HepG2 (cell line): ENCODE measurements at regions of chr11 and their contacts with region 1.

Region 1: DNA sequence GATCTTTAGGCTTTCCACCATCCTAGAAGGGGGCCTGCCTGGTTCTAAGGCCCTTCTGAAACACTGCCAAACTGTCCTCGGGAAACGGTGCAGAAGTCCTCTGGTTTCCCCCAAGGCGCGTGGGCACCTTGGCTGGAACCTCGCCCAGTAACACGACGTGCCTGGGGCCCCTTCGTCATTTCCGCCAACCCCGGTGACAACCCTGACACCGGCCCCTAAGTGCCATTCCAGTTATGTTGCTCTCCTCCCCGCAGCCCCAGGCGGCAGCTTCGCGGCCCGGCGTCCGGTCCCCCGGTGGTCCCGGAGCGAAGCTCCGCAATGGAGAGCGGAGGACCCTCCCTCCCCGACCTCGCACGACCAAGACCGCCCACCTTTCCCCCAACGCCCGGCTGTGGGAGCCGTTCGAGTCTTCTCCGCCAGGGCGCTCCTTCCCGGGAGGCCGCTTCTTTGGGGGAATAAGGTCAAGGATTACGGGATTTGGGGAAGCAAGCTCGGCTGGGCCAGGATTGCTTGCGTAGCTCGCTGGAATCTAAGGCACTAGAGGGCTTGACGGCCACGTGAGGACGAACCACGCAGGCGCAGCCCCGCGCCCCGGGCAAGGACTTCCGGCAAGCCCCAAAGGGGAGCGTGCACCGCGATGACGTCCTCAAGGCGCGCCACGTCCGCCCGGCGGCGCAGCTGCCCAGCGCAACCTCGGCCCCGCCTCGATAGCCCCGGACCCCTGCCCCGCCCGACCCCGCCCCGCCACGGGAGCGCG is 626 bp downstream of the RNH1 start:
- DNase-seq: peak; percentile 88
- ATAC-seq: peak; percentile 86
- H3K4me3 ChIP-seq: peak overlapping the region; percentile 70 to 99 (median 96)
- H3K27ac ChIP-seq: peak overlapping the region; percentile 98
- H3K4me1 ChIP-seq: peaks cover 21% of the 10 kb centered on the region
- H3K27me3 ChIP-seq: no peaks in the 10 kb centered on the region
- CTCF ChIP-seq: no peak
- EP300 ChIP-seq: peak in 1 of 2 experiments; percentile 63; a peak in 2 of 4 replicates
- POLR2A ChIP-seq: peak; percentile 60 to 61; a peak in 3 of 4 replicates
- RAD21 ChIP-seq: no peak

Region 2: DNA sequence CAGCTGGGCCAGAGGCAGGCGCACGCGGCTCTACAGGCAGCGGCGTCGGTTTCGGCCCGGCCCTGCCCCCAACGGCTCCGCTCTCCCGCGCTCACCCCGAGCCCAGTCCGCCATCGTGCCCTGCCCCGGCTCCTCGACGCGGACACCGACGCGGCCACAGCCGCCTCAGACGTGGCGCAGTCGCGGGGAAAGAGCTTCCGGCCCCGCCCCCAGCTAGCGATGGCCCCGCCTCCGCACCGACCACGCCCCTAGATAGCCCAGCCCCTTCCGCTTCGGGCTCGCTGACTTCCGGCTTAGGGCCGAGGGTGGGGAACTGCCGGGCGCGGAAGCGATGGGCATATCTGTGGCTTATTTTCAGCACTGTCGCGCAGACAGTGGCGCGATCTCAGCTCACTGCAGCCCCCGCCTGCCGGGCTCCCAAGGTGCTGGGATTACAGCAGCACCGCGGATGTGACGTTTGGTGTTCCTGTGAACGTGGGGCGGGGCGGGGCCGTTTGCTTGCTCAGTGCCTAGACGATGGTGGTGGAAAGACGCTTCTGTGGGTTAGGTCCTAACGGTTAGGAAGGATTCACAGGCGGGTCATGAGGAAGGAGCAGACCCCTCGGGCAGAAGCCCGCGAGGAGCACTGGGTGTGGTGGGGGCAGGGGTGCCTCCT is 299.1 kb before region 1 on chr11 and contains the starts of genes BET1L and RIC8A:
- CTCF ChIA-PET with region 1: no interaction called
- POLR2A ChIA-PET with region 1: interaction called, 10 read pairs
- in situ Hi-C with region 1: no loop called
- intact Hi-C with region 1: no loop called
- DNase-seq: peak; percentile 95
- ATAC-seq: peak; percentile 74
- H3K4me3 ChIP-seq: peak within 1 kb of the TSS; percentile 75 to 90 (median 89)
- H3K27ac ChIP-seq: peak within 1 kb of the TSS; percentile 96
- H3K4me1 ChIP-seq: peaks cover 36% of the 10 kb centered on the region
- H3K27me3 ChIP-seq: no peaks in the 10 kb centered on the region; a peak in 1 of 5 replicates
- CTCF ChIP-seq: peak; percentile 6; the same call in 1 of the 2 replicates
- EP300 ChIP-seq: no peak
- POLR2A ChIP-seq: peak in 1 of 2 experiments; percentile 79; a peak in 2 of 4 replicates
- RAD21 ChIP-seq: peak; percentile 60
- total RNA-seq, gene BET1L: 26.2 and 27.3 TPM in 2 replicates
- total RNA-seq, gene RIC8A: 62.1 and 65.0 TPM in 2 replicates

Region 3: GRCh38 chr11:469684-470560 is 36.5 kb before region 1 on chr11:
- CTCF ChIA-PET with region 1: no interaction called
- POLR2A ChIA-PET with region 1: interaction called, 10 read pairs
- in situ Hi-C with region 1: no loop called
- intact Hi-C with region 1: no loop called
- DNase-seq: peak; percentile 83
- ATAC-seq: peak; percentile 89
- H3K4me3 ChIP-seq: peak overlapping the region; percentile 32 to 71 (median 43)
- H3K27ac ChIP-seq: peak overlapping the region; percentile 90
- H3K4me1 ChIP-seq: peaks cover 19% of the 10 kb centered on the region
- H3K27me3 ChIP-seq: no peaks in the 10 kb centered on the region
- CTCF ChIP-seq: peak; percentile 38; the same call in 1 of the 2 replicates
- EP300 ChIP-seq: peak in 1 of 2 experiments; percentile 52; a peak in 2 of 4 replicates
- POLR2A ChIP-seq: peak; percentile 65 to 66
- RAD21 ChIP-seq: no peak

Region 4: GRCh38 chr11:518463-519250 is 12.2 kb after region 1 on chr11:
- CTCF ChIA-PET with region 1: interaction called, 11 read pairs
- POLR2A ChIA-PET with region 1: interaction called, 7 read pairs
- in situ Hi-C with region 1: no loop called
- intact Hi-C with region 1: loop called (anchors 1 kb)
- DNase-seq: peak; percentile 90
- ATAC-seq: peak; percentile 96
- H3K4me3 ChIP-seq: peak overlapping the region in 2 of 3 experiments; percentile 22 to 41; a peak in 4 of 6 replicates
- H3K27ac ChIP-seq: peak overlapping the region; percentile 72
- H3K4me1 ChIP-seq: peaks cover 37% of the 10 kb centered on the region
- H3K27me3 ChIP-seq: no peaks in the 10 kb centered on the region
- CTCF ChIP-seq: peak; percentile 90
- EP300 ChIP-seq: no peak
- POLR2A ChIP-seq: no peak
- RAD21 ChIP-seq: peak; percentile 99